ENCODE measurements at regions of chr1 and their contacts with region 1.

Region 1: GRCh38 chr1:220879076-220879508 is at the start of gene HLX:
- DNase-seq: peak; percentile 84
- ATAC-seq: peak; percentile 83
- H3K4me3 ChIP-seq: peak within 1 kb of the TSS; percentile 62 to 84 (median 75)
- H3K4me3 Mint-ChIP-seq: peak within 1 kb of the TSS; percentile 89
- H3K27ac ChIP-seq: peak within 1 kb of the TSS; percentile 25 to 53
- H3K27ac Mint-ChIP-seq: peak within 1 kb of the TSS; percentile 94
- H3K4me1 ChIP-seq: peaks cover 40 to 55% of the 10 kb centered on the region in 2 donors
- H3K4me1 Mint-ChIP-seq: peaks cover 59% of the 10 kb centered on the region
- H3K27me3 ChIP-seq: peaks cover 0 to 53% (median 23%) of the 10 kb centered on the region in 4 experiments
- H3K27me3 Mint-ChIP-seq: peaks cover 10% of the 10 kb centered on the region
- CTCF ChIP-seq: no peak
- total RNA-seq, gene HLX: 7.7 and 9.1 TPM in 2 replicates

Region 2: DNA sequence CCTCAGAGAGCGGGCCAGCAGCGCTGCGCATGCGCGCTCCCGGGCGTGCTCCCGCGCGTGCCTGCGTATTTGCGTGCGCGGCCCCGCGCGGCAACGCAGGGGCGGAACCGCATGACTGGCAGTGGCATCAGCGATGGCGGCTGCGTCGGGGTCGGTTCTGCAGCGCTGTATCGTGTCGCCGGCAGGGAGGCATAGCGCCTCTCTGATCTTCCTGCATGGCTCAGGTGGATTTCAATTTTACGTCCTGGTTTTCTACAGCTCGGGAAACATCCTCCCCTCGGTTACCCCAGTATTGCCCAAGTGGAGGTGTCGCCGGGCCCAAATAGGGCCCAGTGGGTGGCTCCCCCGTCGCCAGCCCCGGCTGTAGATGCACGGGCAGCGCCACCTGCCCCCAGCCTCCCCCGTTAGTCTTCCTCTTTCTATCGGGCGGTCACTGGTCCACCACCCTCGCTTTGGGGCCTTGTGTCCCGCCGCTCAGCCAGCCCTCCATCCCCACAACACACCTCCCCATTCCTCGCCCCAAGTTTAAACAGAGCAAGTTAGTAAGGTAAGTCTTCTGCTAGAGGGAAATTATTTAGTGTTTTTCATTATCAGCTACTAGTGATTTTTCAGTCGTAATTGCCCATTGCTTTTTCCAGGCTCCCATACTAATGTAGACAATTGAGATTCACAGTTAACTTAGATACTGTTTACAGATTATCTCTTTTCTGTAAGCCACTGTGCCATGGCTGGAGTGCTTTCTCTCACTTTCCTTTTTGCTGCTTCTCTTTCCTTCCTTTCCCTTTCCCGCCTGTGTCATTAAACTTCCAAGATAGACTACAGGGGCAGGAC is 1705.1 kb before region 1 on chr1 and contains the start of gene LYPLAL1:
- CTCF ChIA-PET with region 1: no interaction called
- POLR2A ChIA-PET with region 1: no interaction called
- intact Hi-C with region 1: loop called (anchors 10 kb)
- DNase-seq: peak; percentile 94
- ATAC-seq: peak; percentile 81
- H3K4me3 ChIP-seq: peak within 1 kb of the TSS; percentile 70 to 87 (median 80)
- H3K4me3 Mint-ChIP-seq: peak within 1 kb of the TSS; percentile 99
- H3K27ac ChIP-seq: peak within 1 kb of the TSS; percentile 93 to 95
- H3K27ac Mint-ChIP-seq: peak within 1 kb of the TSS; percentile 99
- H3K4me1 ChIP-seq: peaks cover 27 to 38% of the 10 kb centered on the region in 2 donors
- H3K4me1 Mint-ChIP-seq: peaks cover 54% of the 10 kb centered on the region
- H3K27me3 ChIP-seq: no peaks in the 10 kb centered on the region
- H3K27me3 Mint-ChIP-seq: no peaks in the 10 kb centered on the region
- CTCF ChIP-seq: peak; percentile 19
- total RNA-seq, gene LYPLAL1: 63.6 and 65.4 TPM in 2 replicates

Region 3: GRCh38 chr1:221069178-221069903 is 190.2 kb after region 1 on chr1:
- CTCF ChIA-PET with region 1: interaction called, 9 read pairs
- POLR2A ChIA-PET with region 1: interaction called, 9 read pairs
- intact Hi-C with region 1: loop called (anchors 1 kb)
- DNase-seq: peak; percentile 85
- ATAC-seq: peak; percentile 85
- H3K4me3 ChIP-seq: peak overlapping the region in 4 of 5 experiments; percentile 13 to 46 (median 28)
- H3K4me3 Mint-ChIP-seq: peak overlapping the region; percentile 76
- H3K27ac ChIP-seq: peak overlapping the region; percentile 80 to 87
- H3K27ac Mint-ChIP-seq: peak overlapping the region; percentile 99
- H3K4me1 ChIP-seq: peaks cover 68 to 75% of the 10 kb centered on the region in 2 donors
- H3K4me1 Mint-ChIP-seq: peaks cover 78% of the 10 kb centered on the region
- H3K27me3 ChIP-seq: no peaks in the 10 kb centered on the region
- H3K27me3 Mint-ChIP-seq: no peaks in the 10 kb centered on the region
- CTCF ChIP-seq: no peak

Region 4: DNA sequence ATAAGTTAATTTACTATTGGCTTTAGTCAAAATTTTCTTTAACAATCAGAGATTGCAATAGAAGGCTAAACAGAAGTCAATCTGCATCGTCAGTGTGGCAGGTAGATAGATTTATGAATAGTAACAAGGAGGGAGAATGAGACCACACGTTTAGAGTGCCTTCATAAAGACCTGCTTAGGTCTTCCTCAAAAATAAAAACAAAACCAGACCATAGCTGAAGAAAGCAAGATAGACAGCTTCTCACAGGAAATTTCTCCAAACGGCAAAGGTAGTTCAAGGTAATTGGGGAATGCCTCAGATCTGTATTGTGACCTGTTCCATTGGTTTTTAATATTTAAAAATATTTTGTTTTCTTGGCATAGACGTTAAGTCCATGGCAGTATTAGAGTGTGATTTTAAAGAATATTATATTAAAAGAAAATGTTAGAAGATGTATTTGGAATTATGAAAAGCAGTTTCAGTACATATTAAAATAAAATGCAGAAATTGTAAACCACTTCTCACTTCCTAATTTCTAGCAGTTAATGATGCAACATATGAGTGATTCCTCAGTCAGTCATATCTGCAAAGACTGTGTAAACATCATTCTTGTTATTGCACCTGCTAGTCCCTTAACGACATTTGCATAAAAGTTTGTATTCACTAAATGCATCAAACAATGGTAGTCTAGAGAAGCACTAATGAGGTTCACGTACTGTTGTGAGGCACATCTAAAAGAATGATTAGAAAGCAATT is 278.1 kb after region 1 on chr1:
- CTCF ChIA-PET with region 1: interaction called, 3 read pairs
- POLR2A ChIA-PET with region 1: no interaction called
- intact Hi-C with region 1: loop called (anchors 5 kb)
- DNase-seq: peak; percentile 76
- ATAC-seq: peak; percentile 89
- H3K4me3 ChIP-seq: peak overlapping the region in 1 of 5 experiments; percentile 12
- H3K4me3 Mint-ChIP-seq: peak overlapping the region; percentile 52
- H3K27ac ChIP-seq: peak overlapping the region; percentile 37 to 42
- H3K27ac Mint-ChIP-seq: peak overlapping the region; percentile 74
- H3K4me1 ChIP-seq: peaks cover 24 to 30% of the 10 kb centered on the region in 2 donors
- H3K4me1 Mint-ChIP-seq: peaks cover 33% of the 10 kb centered on the region
- H3K27me3 ChIP-seq: peaks cover 0 to 8% (median 2%) of the 10 kb centered on the region in 4 experiments
- H3K27me3 Mint-ChIP-seq: no peaks in the 10 kb centered on the region
- CTCF ChIP-seq: no peak

Region 5: GRCh38 chr1:221435504-221435904 is 556.4 kb after region 1 on chr1:
- CTCF ChIA-PET with region 1: interaction called, 114 read pairs
- POLR2A ChIA-PET with region 1: no interaction called
- intact Hi-C with region 1: loop called (anchors 1 kb)
- DNase-seq: peak; percentile 62
- ATAC-seq: peak; percentile 56
- H3K4me3 ChIP-seq: no peak overlapping the region
- H3K4me3 Mint-ChIP-seq: no peak overlapping the region
- H3K27ac ChIP-seq: no peak overlapping the region
- H3K27ac Mint-ChIP-seq: no peak overlapping the region
- H3K4me1 ChIP-seq: peaks cover 10 to 11% of the 10 kb centered on the region in 2 donors
- H3K4me1 Mint-ChIP-seq: peaks cover 18% of the 10 kb centered on the region
- H3K27me3 ChIP-seq: no peaks in the 10 kb centered on the region
- H3K27me3 Mint-ChIP-seq: peaks cover 9% of the 10 kb centered on the region
- CTCF ChIP-seq: peak; percentile 96